ENCODE measurements at regions of chr7 and their contacts with region 1.

Region 1: DNA sequence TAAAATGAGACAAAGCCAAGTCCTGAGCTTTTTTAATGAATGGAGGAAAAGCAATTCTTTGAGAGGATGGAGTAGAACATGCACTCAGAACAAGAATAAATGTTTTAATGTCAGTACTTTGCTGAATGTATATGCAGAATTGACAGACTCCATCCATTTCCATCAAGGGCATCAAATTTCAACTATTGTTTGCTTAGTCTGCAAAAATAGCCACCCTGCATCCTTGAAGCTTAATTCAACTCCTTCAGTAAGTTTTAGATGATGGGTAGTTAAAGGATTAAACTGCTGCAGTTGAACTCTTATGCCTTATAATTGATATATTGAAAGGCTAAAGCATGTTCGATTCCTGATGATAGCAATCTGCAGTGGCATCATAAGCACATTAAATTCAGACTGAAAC is 99.7 kb upstream of the IFRD1 start:
- DNase-seq: no peak
- H3K4me3 ChIP-seq: no peak overlapping the region
- H3K27ac ChIP-seq: no peak overlapping the region
- H3K4me1 ChIP-seq: no peaks in the 10 kb centered on the region
- H3K27me3 ChIP-seq: no peaks in the 10 kb centered on the region
- CTCF ChIP-seq: no peak
- EP300 ChIP-seq: no peak
- POLR2A ChIP-seq: no peak

Region 2: GRCh38 chr7:110922906-110923305 is 1427.7 kb before region 1 on chr7:
- in situ Hi-C with region 1: no loop called
- intact Hi-C with region 1: loop called (anchors 5 kb)
- DNase-seq: no peak
- H3K4me3 ChIP-seq: no peak overlapping the region
- H3K27ac ChIP-seq: no peak overlapping the region
- H3K4me1 ChIP-seq: no peaks in the 10 kb centered on the region
- H3K27me3 ChIP-seq: no peaks in the 10 kb centered on the region
- CTCF ChIP-seq: no peak
- EP300 ChIP-seq: no peak
- POLR2A ChIP-seq: no peak

Measured in transverse colon (tissue), 4 donors.